Transverse colon (tissue), 4 donors: ENCODE measurements at regions of chr19 and their contacts with region 1.

Region 1: GRCh38 chr19:2151339-2152229 is at the start of gene AP3D1:
- DNase-seq: peak; percentile 100
- H3K4me3 ChIP-seq: peak within 1 kb of the TSS; percentile 65 to 93 (median 78)
- H3K27ac ChIP-seq: peak within 1 kb of the TSS; percentile 88 to 93 (median 90)
- H3K4me1 ChIP-seq: peaks cover 18 to 58% (median 36%) of the 10 kb centered on the region in 4 donors
- H3K27me3 ChIP-seq: no peaks in the 10 kb centered on the region
- CTCF ChIP-seq: no peak
- EP300 ChIP-seq: no peak
- POLR2A ChIP-seq: no peak
- total RNA-seq, gene AP3D1: 101 to 189 (median 152) TPM

Region 2: DNA sequence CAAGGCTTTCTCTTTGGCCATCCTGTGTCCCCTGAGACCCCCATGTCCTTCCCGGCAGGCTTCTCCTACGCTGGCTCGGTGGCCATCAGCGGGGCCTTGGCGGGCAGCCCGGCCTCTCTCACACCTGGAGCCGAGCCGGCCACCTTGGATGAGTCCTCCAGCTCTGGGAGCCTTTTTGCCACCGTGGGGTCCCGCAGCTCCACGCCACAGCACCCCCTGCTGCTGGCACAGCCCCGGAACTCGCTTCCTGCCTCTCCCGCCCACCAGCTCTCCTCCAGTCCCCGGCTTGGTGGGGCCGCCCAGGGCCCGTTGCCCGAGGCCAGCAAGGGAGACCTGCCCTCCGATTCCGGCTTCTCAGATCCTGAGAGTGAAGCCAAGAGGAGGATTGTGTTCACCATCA is 70.3 kb after region 1 on chr19:
- in situ Hi-C with region 1: no loop called
- intact Hi-C with region 1: loop called (anchors 5 kb)
- DNase-seq: no peak
- H3K4me3 ChIP-seq: no peak overlapping the region
- H3K27ac ChIP-seq: no peak overlapping the region
- H3K4me1 ChIP-seq: no peaks in the 10 kb centered on the region
- H3K27me3 ChIP-seq: no peaks in the 10 kb centered on the region
- CTCF ChIP-seq: peak in 1 of 5 experiments; percentile 6
- EP300 ChIP-seq: no peak
- POLR2A ChIP-seq: no peak

Region 3: GRCh38 chr19:2269244-2269947 is 117.8 kb after region 1 on chr19:
- in situ Hi-C with region 1: loop called in 1 of 4 experiments (anchors 25 kb)
- intact Hi-C with region 1: no loop called
- DNase-seq: peak; percentile 99
- H3K4me3 ChIP-seq: peak overlapping the region; percentile 92 to 100 (median 96)
- H3K27ac ChIP-seq: peak overlapping the region; percentile 97 to 99 (median 99)
- H3K4me1 ChIP-seq: peaks cover 35 to 56% (median 52%) of the 10 kb centered on the region in 4 donors
- H3K27me3 ChIP-seq: no peaks in the 10 kb centered on the region
- CTCF ChIP-seq: peak in 4 of 5 experiments; percentile 18 to 69 (median 36)
- EP300 ChIP-seq: peak; percentile 27
- POLR2A ChIP-seq: peak; percentile 100

Region 4: DNA sequence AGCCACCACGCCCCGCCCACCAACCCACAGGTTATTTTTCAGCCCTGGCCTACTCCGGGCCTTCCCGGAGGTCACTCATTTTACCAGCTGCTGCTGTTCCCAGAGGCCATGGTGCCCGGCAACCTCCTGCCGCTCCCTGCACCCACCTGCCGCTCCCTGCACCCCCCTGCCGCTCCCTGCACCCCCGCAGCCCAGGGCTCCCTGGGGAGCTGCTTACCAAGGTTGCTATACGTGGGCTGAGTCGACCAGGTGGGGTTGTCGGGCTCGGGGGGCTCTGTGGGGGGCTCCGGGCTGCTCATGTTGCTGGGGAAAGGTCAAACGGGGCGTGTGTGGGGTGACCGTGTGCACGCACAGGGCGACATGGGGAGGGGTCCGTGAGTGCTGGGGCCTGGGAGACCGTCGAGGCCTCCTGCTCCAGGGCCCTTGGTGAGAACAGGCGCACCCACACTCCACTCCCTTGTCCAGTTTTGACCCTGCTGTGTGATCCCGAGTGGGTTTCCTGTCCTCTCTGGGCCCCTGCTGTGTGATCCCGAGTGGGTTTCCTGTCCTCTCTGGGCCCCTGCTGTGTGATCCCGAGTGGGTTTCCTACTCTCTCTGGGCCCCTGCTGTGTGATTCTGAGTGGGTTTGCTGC is 129.2 kb after region 1 on chr19:
- in situ Hi-C with region 1: no loop called
- intact Hi-C with region 1: no loop called
- DNase-seq: no peak
- H3K4me3 ChIP-seq: no peak overlapping the region
- H3K27ac ChIP-seq: no peak overlapping the region
- H3K4me1 ChIP-seq: peaks cover 4 to 36% (median 19%) of the 10 kb centered on the region in 4 donors
- H3K27me3 ChIP-seq: peaks cover 31% of the 10 kb centered on the region
- CTCF ChIP-seq: no peak
- EP300 ChIP-seq: no peak
- POLR2A ChIP-seq: no peak

Region 5: DNA sequence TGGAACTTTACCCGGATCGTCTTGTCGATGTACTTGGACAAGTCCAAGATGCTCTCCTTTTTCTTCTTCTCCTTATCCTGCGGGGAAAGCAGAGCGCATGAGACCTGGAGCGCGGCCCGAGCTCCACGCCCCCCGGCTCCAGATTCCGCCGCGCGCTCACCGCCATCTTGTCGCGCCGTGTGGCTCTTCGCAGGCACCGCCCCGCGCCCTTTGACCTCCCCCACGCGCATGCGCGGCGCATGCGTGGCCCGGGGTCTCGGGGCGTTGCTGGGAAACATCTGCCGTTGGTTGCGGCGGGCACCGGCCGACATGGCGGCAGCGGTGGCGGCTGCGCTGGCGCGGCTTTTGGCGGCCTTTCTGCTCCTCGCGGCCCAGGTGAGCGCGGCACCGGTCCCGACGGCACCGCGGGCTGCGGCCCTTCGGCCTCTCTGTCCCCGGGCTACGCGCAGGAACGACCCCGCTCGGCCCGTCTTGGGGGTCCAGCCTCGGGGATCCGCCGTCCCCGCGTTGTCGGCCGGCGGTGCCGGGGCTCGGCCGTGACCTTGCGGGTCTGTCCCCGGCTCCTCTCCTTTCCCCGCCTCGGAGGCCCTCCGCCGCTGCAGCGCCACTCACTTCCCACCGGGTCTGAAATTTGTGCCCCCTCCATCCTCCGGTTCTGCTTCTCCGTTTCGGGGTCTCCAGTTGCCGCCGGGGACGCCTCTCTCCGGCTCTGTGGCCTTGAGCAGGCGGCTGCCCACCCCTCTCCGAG is 177.0 kb after region 1 on chr19 and contains the starts of genes LSM7 and SPPL2B:
- in situ Hi-C with region 1: no loop called
- intact Hi-C with region 1: loop called (anchors 10 kb)
- DNase-seq: peak; percentile 93
- H3K4me3 ChIP-seq: peak within 1 kb of the TSS; percentile 76 to 94 (median 82)
- H3K27ac ChIP-seq: peak within 1 kb of the TSS; percentile 88 to 94 (median 90)
- H3K4me1 ChIP-seq: peaks cover 41 to 58% (median 56%) of the 10 kb centered on the region in 4 donors
- H3K27me3 ChIP-seq: no peaks in the 10 kb centered on the region
- CTCF ChIP-seq: no peak
- EP300 ChIP-seq: no peak
- POLR2A ChIP-seq: peak; percentile 92
- total RNA-seq, gene LSM7: 62.9 to 151 (median 132) TPM
- total RNA-seq, gene SPPL2B: 149 to 367 (median 242) TPM